ENCODE measurements at regions of chr16 and their contacts with region 1.

Region 1: GRCh38 chr16:24253192-24253591 is 2.9 kb upstream of the CACNG3 start:
- DNase-seq: peak in 2 of 6 donors; percentile 15 to 24
- ATAC-seq: peak in 3 of 4 donors; percentile 67 to 80 (median 79)
- H3K4me3 ChIP-seq: no peak overlapping the region
- H3K27ac ChIP-seq: no peak overlapping the region
- H3K4me1 ChIP-seq: no peaks in the 10 kb centered on the region
- H3K27me3 ChIP-seq: peaks cover 0 to 26% (median 0%) of the 10 kb centered on the region in 4 donors
- CTCF ChIP-seq: peak; percentile 48 to 68 (median 60)

Region 2: GRCh38 chr16:24041826-24042631 is 211.2 kb before region 1 on chr16:
- intact Hi-C with region 1: loop called in 1 of 3 experiments (anchors 10 kb)
- DNase-seq: peak in 5 of 6 donors; percentile 28 to 75 (median 42)
- ATAC-seq: peak in 3 of 4 donors; percentile 73 to 89 (median 73)
- H3K4me3 ChIP-seq: no peak overlapping the region
- H3K27ac ChIP-seq: no peak overlapping the region
- H3K4me1 ChIP-seq: no peaks in the 10 kb centered on the region
- H3K27me3 ChIP-seq: no peaks in the 10 kb centered on the region
- CTCF ChIP-seq: peak; percentile 45 to 62 (median 54)

Region 3: DNA sequence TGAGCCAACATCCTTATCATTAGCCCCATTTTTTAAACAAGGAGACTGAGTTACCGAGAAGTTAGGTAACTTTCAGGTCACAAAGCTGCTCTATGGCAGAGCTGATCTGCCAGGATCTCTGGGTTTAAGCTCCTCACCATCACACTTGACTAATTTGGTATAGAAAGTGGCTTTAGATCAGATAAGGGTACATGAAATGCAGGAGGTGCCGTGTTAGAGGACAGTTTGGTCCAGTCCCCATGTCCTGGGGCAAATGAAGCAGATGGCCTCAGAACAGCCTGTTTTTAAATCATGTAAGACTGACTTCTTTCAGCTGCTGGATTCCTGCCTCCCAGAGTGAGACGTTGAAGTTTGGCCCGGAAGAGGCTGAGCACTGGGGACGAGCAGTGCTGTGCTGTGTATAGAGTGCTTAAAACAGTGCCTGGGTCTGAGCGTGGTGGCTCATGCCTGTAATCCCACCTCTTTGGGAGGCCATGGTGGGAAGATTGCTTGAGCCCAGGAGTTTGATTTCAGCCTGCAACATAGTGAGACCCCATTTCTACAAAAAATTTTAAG is 184.1 kb before region 1 on chr16:
- intact Hi-C with region 1: loop called in 1 of 3 experiments (anchors 10 kb)
- DNase-seq: no peak
- ATAC-seq: no peak
- H3K4me3 ChIP-seq: no peak overlapping the region
- H3K27ac ChIP-seq: no peak overlapping the region
- H3K4me1 ChIP-seq: no peaks in the 10 kb centered on the region
- H3K27me3 ChIP-seq: no peaks in the 10 kb centered on the region
- CTCF ChIP-seq: no peak

Measured in pancreas (tissue), 10 donors.